PC-9 (cell line): ENCODE measurements at regions of chr10 and their contacts with region 1.

Region 1: DNA sequence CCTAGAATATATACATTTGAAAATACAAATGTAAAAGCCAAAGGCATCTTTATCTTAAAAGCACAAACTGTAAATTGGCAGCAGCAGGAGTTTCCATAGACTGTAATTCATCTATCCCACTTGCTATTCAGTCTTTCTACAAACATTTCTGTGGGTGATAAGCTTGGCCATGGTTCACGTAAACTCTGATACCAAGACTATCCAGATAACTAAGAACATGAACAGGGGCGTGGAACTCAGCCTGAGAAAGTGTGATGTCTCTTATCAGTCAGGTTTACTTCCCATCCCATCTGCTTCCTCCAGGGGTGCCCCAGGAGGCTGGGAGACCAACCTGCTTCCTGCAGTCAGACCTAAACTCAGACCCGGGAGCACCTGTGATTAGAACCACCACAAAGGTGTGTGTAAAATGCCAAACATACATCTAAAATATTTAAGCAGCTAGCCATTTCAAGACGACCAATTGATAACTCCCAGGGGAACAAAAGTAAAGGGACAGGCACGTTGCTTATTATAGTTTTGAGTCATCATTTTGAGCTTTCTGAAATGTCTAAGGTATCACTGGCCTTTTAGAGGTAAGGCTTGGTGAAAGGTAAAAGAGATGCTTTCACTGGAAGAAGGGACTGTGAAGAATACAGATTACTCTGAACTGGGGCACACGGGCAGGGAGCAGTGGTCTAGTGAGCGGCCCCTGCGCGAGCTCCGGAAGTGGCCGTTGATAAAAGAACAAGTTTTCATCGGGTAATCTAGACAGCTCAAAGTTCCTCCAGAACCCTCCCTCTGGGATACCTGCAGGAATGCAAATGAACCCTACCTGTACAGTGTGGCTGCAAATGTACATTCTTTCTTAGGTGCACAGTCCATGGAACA is 51.5 kb downstream of the RSU1 start:
- DNase-seq: no peak
- H3K4me3 ChIP-seq: no peak overlapping the region
- H3K27ac ChIP-seq: no peak overlapping the region
- H3K4me1 ChIP-seq: no peaks in the 10 kb centered on the region
- H3K27me3 ChIP-seq: no peaks in the 10 kb centered on the region
- CTCF ChIP-seq: no peak

Region 2: GRCh38 chr10:16717622-16718395 is 47.9 kb before region 1 on chr10:
- CTCF ChIA-PET with region 1: interaction called, 18 read pairs
- POLR2A ChIA-PET with region 1: no interaction called
- intact Hi-C with region 1: no loop called
- DNase-seq: no peak
- H3K4me3 ChIP-seq: no peak overlapping the region
- H3K27ac ChIP-seq: no peak overlapping the region
- H3K4me1 ChIP-seq: no peaks in the 10 kb centered on the region
- H3K27me3 ChIP-seq: no peaks in the 10 kb centered on the region
- CTCF ChIP-seq: no peak

Region 3: GRCh38 chr10:16814012-16814411 is 48.3 kb after region 1 on chr10:
- CTCF ChIA-PET with region 1: no interaction called
- POLR2A ChIA-PET with region 1: interaction called, 10 read pairs
- intact Hi-C with region 1: no loop called
- DNase-seq: no peak
- H3K4me3 ChIP-seq: no peak overlapping the region
- H3K27ac ChIP-seq: no peak overlapping the region
- H3K4me1 ChIP-seq: peaks cover 17% of the 10 kb centered on the region
- H3K27me3 ChIP-seq: no peaks in the 10 kb centered on the region
- CTCF ChIP-seq: no peak

Region 4: DNA sequence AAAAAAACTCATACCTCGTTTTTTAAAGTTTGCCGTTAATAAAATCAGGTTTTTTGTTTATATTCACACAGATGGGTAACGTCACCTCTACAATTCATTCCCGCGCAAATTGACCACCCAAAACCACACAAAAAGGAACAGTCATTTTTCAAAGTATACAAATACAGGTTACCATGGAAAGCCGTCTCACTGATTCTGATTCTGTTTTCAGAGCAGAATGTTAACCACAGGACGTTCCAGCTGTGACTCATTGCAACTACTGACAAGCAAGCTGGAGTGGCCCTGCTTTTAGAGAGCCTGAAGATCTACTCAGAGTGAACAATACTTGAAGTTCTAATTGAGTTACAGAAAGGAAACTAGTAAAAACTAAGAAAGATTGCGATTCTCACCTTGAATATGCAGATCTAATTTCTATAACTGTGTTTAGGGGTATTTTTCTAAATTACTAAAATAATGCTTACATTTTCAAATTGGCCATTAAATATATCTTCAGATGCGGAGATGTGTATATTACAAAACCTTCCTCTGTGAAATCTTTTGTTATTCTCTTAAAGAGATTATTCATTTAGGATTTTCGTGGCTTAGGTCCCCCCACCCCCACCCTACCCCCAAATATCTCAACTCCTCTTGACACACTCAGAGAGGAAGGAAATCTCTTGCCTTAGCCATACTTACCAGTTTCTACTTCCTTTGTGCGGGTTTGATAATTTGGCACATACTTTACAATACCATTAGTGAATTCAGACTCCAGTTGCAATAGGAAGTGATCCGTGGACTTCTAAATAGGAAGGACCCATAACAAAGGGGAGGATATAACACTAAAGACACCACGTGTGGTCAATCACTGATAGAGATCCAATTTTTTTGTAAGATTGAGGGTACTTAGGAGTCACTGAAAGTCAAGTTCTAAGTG is 257.9 kb after region 1 on chr10:
- CTCF ChIA-PET with region 1: no interaction called
- POLR2A ChIA-PET with region 1: no interaction called
- intact Hi-C with region 1: no loop called
- DNase-seq: peak; percentile 67 to 87
- H3K4me3 ChIP-seq: no peak overlapping the region
- H3K27ac ChIP-seq: no peak overlapping the region
- H3K4me1 ChIP-seq: peaks cover 11% of the 10 kb centered on the region
- H3K27me3 ChIP-seq: no peaks in the 10 kb centered on the region
- CTCF ChIP-seq: no peak